ENCODE measurements at regions of chr21 and their contacts with region 1.

Region 1: GRCh38 chr21:46144464-46145070 is 10.8 kb downstream of the FTCD start:
- DNase-seq: peak in 2 of 10 donors; percentile 53 to 62
- H3K4me3 ChIP-seq: no peak overlapping the region
- H3K27ac ChIP-seq: peak overlapping the region in 51 of 59 donors; percentile 4 to 95 (median 78)
- H3K27me3 ChIP-seq: no peaks in the 10 kb centered on the region
- CTCF ChIP-seq: no peak

Region 2: GRCh38 chr21:46160907-46161632 is 16.5 kb after region 1 on chr21:
- intact Hi-C with region 1: no loop called
- DNase-seq: peak in 6 of 10 donors; percentile 17 to 43 (median 24)
- H3K4me3 ChIP-seq: no peak overlapping the region
- H3K27ac ChIP-seq: no peak overlapping the region
- H3K27me3 ChIP-seq: peaks cover 0 to 10% (median 0%) of the 10 kb centered on the region in 45 donors
- CTCF ChIP-seq: no peak

Region 3: GRCh38 chr21:46184625-46185555 is 40.3 kb after region 1 on chr21:
- intact Hi-C with region 1: loop called in 1 of 2 experiments (anchors 5 kb)
- DNase-seq: peak; percentile 73 to 94 (median 89)
- H3K4me3 ChIP-seq: peak overlapping the region; percentile 36 to 95 (median 76)
- H3K27ac ChIP-seq: peak overlapping the region in 58 of 59 donors; percentile 34 to 98 (median 90)
- H3K27me3 ChIP-seq: no peaks in the 10 kb centered on the region
- CTCF ChIP-seq: peak in 1 of 56 donors; percentile 10

Region 4: DNA sequence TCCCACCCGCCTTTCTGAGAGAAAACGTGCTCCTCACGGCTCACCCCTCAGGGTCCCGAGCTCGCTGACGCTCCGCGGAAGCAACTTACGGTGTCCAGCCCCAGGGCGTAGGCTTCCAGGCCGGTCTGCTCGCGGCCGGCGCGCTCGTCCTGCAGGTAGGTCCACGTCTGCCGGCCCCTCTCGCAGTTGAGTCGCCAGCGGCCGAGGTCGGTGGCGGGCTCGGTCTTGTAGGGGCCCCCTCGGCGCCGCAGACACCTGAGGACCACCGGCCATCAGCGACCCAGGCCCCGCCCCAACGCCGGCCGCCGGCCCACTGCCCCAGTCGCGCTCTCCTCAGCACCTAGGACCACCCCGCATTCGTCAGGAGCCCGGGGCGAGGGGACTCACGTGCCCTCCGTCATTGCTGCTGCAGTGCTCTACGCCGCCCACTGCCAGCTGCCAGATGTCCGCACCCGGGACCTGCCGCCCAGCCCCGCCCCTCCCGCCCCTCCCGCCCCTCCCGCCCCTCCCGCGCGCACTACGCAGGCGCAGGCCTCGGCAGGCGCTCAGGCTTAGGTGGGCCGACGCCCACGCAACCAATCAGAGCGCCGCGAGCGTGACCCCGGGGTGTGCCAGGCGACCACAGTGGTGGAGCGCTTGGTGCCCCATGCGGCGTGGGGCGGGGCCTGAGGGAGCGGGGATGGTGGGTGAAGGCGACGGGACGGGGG is 83.9 kb after region 1 on chr21 and contains the start of gene LSS:
- intact Hi-C with region 1: loop called (anchors 2 to 5 kb)
- DNase-seq: peak; percentile 94 to 98 (median 96)
- H3K4me3 ChIP-seq: peak within 1 kb of the TSS; percentile 61 to 100 (median 94)
- H3K27ac ChIP-seq: peak within 1 kb of the TSS; percentile 74 to 98 (median 93)
- H3K27me3 ChIP-seq: no peaks in the 10 kb centered on the region
- CTCF ChIP-seq: peak in 10 of 56 donors; percentile 4 to 27 (median 14)
- total RNA-seq, gene LSS: 61.5 to 278 (median 121) TPM

Region 5: GRCh38 chr21:46285761-46286496 is 141.4 kb after region 1 on chr21 and contains the start of gene YBEY:
- intact Hi-C with region 1: loop called in 1 of 2 experiments (anchors 10 kb)
- DNase-seq: peak; percentile 76 to 93 (median 88)
- H3K4me3 ChIP-seq: peak within 1 kb of the TSS; percentile 61 to 98 (median 86)
- H3K27ac ChIP-seq: peak within 1 kb of the TSS; percentile 74 to 98 (median 95)
- H3K27me3 ChIP-seq: no peaks in the 10 kb centered on the region
- CTCF ChIP-seq: peak in 48 of 56 donors; percentile 9 to 66 (median 34)
- total RNA-seq, gene YBEY: 4.9 to 22.3 (median 13.5) TPM

Region 6: GRCh38 chr21:46323227-46324128 is 178.9 kb after region 1 on chr21 and contains the start of gene C21orf58:
- intact Hi-C with region 1: loop called in 1 of 2 experiments (anchors 10 kb)
- DNase-seq: peak; percentile 96 to 99 (median 98)
- H3K4me3 ChIP-seq: peak within 1 kb of the TSS; percentile 78 to 100 (median 99)
- H3K27ac ChIP-seq: peak within 1 kb of the TSS; percentile 83 to 100 (median 98)
- H3K27me3 ChIP-seq: no peaks in the 10 kb centered on the region
- CTCF ChIP-seq: peak in 10 of 56 donors; percentile 8 to 38 (median 18)
- total RNA-seq, gene C21orf58: 2.4 to 11.8 (median 5.4) TPM

Region 7: DNA sequence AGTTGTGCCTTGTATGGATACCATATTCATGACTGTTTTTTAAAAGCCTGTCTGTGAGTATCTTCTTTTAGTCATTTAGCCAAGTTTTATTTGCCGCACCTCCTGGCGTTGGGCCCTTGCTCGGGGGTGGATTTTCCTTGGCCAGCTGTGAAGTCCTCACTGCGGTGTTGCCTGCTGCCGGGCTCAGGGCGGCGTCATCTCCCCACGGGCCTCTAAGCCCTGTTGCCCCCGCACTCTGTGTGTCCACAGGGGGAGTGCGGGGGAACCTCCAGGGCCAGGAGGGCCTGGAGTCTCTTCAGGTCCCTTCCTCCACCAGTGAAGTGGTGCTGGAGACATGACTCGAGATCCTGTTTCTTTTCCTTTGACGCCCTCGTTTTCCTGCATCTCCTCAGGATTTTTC is 248.4 kb after region 1 on chr21:
- intact Hi-C with region 1: loop called in 1 of 2 experiments (anchors 10 kb)
- DNase-seq: peak in 7 of 10 donors; percentile 36 to 80 (median 67)
- H3K4me3 ChIP-seq: no peak overlapping the region
- H3K27ac ChIP-seq: peak overlapping the region in 42 of 59 donors; percentile 16 to 86 (median 70)
- H3K27me3 ChIP-seq: no peaks in the 10 kb centered on the region
- CTCF ChIP-seq: no peak

Region 8: DNA sequence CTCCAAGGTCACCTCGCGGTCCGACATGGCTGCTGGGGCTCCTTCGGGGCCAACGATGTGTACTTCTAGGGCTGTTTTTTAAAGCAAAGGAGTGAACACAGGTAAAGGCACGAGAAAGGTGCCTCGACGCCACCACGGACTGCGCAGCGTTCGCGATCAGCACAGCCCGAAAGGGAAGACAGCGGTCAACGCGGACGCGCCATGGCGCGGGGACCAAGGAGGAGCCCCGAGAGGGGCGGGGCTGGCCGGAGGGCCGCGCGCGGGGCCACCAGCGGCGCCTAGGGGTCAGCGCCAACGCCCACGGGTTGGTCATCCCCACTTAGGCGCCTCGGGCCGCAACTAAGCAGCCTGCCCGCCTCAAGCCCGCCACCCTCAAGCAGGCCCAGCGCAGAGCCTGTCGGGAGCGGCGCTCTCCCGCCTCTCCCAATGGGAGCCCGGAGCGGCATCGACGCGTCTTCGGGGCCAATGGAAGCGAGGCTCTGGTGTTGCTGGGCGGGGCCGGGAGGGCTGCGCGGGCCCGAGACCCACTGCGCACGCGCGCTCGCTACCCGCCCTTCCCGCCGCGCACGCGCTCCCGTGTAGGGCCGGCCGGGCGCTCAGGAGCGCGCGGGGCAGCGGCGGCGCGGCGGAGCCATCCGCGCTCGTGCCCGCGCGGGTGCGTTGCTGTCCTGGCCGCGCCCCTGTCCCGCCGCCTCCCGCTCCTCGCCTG is 313.9 kb after region 1 on chr21 and contains the start of gene DIP2A:
- intact Hi-C with region 1: loop called in 1 of 2 experiments (anchors 10 kb)
- DNase-seq: peak; percentile 89 to 97 (median 94)
- H3K4me3 ChIP-seq: peak within 1 kb of the TSS; percentile 69 to 100 (median 95)
- H3K27ac ChIP-seq: peak within 1 kb of the TSS; percentile 76 to 97 (median 94)
- H3K27me3 ChIP-seq: no peaks in the 10 kb centered on the region
- CTCF ChIP-seq: peak in 37 of 56 donors; percentile 7 to 57 (median 32)
- total RNA-seq, gene DIP2A: 39.7 to 104 (median 66.4) TPM

Measured in dorsolateral prefrontal cortex (tissue), 120 donors.